Left cardiac atrium (tissue), 4 donors: ENCODE measurements at regions of chr9 and their contacts with region 1.

Region 1: DNA sequence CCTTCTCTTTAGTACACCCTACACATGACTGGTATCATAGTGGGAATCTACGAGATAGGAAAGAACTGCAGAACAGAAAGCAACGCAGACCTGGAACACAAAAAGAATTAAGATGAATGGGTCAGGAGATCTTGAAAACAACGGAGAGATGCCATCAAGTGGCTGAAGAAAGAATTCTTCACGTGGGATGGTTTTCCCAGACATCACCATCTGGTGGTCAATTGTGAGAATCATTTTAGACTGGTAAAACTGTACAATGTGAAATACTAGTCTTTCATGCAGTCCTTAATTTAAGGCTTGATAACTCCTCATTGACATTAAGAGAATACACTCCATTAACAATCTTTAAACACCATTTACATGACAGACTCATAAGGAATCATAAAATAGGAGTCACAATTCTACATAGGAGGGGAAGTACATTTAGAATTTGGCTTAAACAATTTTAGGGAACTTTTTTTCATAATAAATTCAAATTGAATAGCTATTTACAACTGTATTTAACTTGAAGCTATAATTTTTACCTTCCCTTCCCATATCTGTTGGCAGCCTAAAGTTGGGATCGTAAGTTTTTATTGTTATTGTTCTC is 128.4 kb upstream of the TRPM3 start:
- DNase-seq: no peak
- ATAC-seq: peak; percentile 67 to 68

Region 2: GRCh38 chr9:70639853-70640814 is 609.7 kb before region 1 on chr9:
- intact Hi-C with region 1: loop called (anchors 2 to 10 kb)
- DNase-seq: no peak
- ATAC-seq: peak; percentile 57 to 59

Region 3: GRCh38 chr9:70924895-70925547 is 324.8 kb before region 1 on chr9:
- intact Hi-C with region 1: loop called in 1 of 2 experiments (anchors 5 kb)
- DNase-seq: no peak
- ATAC-seq: peak; percentile 96

Region 4: DNA sequence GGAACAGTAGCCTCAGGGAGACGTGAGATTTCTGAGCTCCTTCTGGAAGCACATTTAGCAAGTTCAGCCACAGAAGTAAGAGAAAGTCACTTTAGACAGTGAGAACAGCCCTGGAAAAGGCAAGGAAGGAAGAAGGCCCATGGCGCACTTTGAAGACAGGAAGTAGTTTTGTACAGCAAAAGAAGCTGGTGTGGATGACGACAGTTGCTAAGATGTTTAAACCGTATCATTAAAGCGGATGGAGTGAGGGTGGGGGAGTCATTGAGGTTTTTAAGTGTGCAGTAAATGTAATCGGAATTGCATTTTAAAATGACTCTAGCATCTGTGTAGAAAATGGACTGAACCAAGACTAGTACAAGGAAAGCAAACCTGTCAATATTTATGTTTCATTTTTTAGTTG is 113.1 kb before region 1 on chr9:
- intact Hi-C with region 1: no loop called
- DNase-seq: no peak
- ATAC-seq: no peak

Region 5: GRCh38 chr9:71349218-71349617 is 99.4 kb after region 1 on chr9:
- intact Hi-C with region 1: no loop called
- DNase-seq: no peak
- ATAC-seq: no peak